ENCODE measurements at regions of chr9 and their contacts with region 1.

Region 1: DNA sequence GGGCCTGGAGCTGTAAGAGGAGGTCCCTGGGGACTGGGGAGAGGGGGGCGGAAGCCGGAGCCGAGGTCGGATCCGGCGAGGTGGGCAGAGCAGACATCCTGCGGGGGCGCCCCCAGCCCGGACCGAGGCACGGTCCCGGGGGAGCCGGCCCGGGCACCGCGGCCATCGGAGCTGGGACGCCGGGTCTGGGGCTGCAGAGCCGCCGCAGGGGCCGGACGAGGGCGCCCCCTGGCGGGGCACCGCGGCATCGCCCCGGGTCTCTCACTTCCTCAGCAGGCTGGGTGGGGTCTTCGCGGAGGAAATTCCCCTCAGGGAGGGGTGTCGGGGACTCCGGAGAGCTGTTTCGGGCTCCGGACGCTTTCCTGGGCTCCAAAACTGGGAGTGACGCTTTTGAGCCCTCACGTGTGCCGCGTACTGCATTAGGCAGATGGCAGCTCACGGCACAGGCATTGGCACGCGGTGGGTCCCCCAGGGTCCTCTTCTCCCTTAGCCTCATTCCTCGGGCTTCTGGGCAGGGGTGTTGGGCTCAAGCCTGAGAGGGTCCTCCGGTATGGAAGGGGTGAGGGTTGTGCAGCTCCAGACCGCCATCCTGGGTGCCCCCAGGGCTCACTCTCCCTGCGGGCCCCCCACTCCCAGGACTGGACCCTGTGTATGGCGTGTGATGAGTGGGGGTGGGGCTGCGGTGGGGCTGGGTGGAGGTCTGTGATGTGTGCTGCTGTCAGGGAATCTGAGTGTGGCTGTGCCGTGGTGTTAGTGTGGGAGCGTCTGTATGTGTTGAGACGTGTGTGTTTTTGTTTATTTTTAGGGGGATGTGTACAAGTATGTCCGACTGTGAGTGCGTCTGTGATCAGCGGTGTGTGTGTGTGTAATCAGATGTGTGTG is 29.6 kb downstream of the LHX2 start:
- DNase-seq: peak; percentile 51 to 73
- ATAC-seq: peak; percentile 72 to 87 (median 82)
- H3K4me3 ChIP-seq: peak overlapping the region; percentile 56
- H3K27ac ChIP-seq: no peak overlapping the region
- H3K4me1 ChIP-seq: peaks cover 2% of the 10 kb centered on the region
- H3K27me3 ChIP-seq: peaks cover 0 to 79% (median 14%) of the 10 kb centered on the region in 3 donors
- CTCF ChIP-seq: peak; percentile 99

Region 2: GRCh38 chr9:123401879-123402513 is 639.2 kb before region 1 on chr9:
- intact Hi-C with region 1: loop called in 1 of 2 experiments (anchors 5 kb)
- DNase-seq: no peak
- ATAC-seq: peak; percentile 46 to 68 (median 65)
- H3K4me3 ChIP-seq: no peak overlapping the region
- H3K27ac ChIP-seq: no peak overlapping the region
- H3K4me1 ChIP-seq: no peaks in the 10 kb centered on the region
- H3K27me3 ChIP-seq: no peaks in the 10 kb centered on the region
- CTCF ChIP-seq: peak; percentile 64

Region 3: GRCh38 chr9:123544007-123544827 is 497.0 kb before region 1 on chr9:
- intact Hi-C with region 1: loop called (anchors 2 to 5 kb)
- DNase-seq: no peak
- ATAC-seq: peak in 1 of 4 donors; percentile 67
- H3K4me3 ChIP-seq: no peak overlapping the region
- H3K27ac ChIP-seq: no peak overlapping the region
- H3K4me1 ChIP-seq: no peaks in the 10 kb centered on the region
- H3K27me3 ChIP-seq: no peaks in the 10 kb centered on the region
- CTCF ChIP-seq: peak; percentile 84

Region 4: DNA sequence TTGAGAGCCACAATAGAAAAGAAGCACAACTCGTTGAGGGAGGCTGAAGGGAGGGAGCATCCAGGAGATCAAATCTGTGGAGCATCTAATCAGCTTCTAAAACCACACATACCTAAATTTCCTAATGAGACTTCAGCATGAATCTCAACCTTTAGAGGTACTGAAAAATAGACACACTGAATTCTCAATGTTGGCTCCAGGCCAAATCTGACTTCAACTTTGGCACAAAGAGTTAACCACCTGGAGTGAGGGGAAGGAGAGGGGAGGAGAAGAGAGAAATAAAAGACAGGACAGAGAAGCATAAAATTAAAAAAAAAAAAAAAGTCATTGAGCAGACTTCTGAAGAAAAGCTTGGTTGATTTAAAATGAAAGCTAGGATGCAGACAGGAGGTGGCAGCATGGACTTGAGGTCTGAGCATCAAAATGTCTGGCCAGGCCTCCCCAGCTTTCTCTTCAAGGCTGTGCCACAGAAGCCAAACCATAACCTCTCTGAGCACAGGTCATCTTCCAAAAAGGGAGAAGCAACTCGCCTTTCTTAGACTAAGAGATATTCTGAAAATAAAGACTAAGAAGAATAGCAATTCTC is 316.9 kb before region 1 on chr9:
- intact Hi-C with region 1: loop called in 1 of 2 experiments (anchors 5 kb)
- DNase-seq: no peak
- ATAC-seq: no peak
- H3K4me3 ChIP-seq: no peak overlapping the region
- H3K27ac ChIP-seq: no peak overlapping the region
- H3K4me1 ChIP-seq: no peaks in the 10 kb centered on the region
- H3K27me3 ChIP-seq: no peaks in the 10 kb centered on the region
- CTCF ChIP-seq: peak; percentile 12

Region 5: DNA sequence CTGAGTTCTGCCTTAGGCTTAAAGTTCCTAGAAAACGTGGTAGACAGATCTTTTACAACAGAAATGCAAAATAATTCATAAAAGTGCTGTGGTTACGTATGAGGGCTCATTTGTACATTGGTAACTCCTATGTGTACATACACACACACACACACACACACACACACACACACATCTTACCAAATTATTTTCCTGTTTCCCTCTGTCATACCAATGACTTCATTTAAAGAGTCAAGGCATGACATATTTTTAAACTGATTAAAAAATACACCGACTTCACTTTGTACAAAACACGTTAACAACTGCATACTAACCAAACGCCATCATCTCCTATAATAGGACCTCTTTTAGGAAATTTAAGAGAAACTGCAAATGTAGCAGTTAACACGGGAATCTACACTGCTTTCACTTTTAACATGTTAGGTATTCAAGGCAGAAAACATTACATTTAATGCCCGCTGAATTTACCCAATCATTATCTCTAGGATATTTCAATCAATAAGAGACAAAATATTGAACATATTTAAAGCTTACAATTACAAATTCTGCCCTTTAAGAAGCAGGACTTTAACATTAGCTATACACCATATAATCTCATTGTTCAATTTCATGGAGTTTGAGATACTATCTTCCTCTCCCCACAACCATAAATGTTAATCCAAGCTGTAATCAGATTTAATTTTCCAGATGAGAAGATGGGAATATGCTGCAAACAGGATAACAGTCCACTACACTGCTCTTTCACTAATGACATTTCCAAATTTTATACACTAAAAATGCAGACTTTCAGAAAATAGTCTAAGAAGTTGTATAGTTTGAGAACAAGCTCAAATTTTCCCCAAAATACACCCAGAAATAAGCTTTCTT is 244.3 kb before region 1 on chr9:
- intact Hi-C with region 1: loop called in 1 of 2 experiments (anchors 10 kb)
- DNase-seq: no peak
- ATAC-seq: no peak
- H3K4me3 ChIP-seq: no peak overlapping the region
- H3K27ac ChIP-seq: no peak overlapping the region
- H3K4me1 ChIP-seq: peaks cover 12% of the 10 kb centered on the region
- H3K27me3 ChIP-seq: no peaks in the 10 kb centered on the region
- CTCF ChIP-seq: no peak

Measured in psoas muscle (tissue), 8 donors.